ENCODE measurements at regions of chr5 and their contacts with region 1.

Region 1: DNA sequence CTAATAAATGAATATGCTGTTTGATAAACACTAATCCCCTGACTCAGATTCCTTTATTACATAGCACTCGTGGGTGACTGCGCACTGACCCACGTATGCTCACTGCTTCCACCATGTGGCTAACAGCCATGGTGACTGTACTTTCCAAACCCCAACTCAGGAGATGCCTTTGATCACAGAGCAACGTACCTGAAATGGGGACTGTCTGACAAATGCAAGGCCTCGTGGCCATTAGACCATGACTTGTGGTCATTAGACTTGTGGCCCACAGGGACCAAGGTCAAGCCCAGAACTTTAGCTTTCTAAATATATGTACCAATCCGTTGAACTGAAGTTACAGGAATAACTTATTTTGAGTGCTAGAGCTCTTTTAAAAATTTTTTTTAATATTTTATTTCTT is 46.6 kb downstream of the CYFIP2 start:
- DNase-seq: peak; percentile 56
- H3K4me3 Mint-ChIP-seq: no peak overlapping the region
- H3K27ac Mint-ChIP-seq: no peak overlapping the region
- H3K4me1 Mint-ChIP-seq: no peaks in the 10 kb centered on the region
- H3K27me3 Mint-ChIP-seq: no peaks in the 10 kb centered on the region
- CTCF ChIP-seq: peak; percentile 64

Region 2: DNA sequence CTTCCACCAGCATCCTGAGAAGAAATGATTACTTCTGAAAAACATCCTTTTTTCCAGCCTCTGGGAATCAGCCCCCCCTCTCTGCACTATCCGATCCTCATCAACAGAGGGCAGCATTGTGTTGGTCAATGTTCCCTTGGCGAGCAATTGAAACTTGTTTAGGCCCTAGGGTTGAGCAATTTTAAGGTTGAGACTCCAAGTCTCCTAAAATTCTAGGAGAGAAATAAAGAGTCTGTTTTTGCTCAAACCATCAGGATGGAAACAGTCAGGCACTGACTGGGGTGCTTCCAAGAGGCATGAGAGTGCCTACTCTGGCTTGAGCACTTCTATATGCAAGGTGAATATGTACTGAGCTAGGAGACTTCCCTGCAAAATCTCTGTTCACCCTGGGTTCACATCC is 58.9 kb before region 1 on chr5:
- CTCF ChIA-PET with region 1: interaction called, 9 read pairs
- intact Hi-C with region 1: loop called (anchors 1 kb)
- DNase-seq: peak; percentile 72
- H3K4me3 Mint-ChIP-seq: no peak overlapping the region
- H3K27ac Mint-ChIP-seq: no peak overlapping the region
- H3K4me1 Mint-ChIP-seq: no peaks in the 10 kb centered on the region
- H3K27me3 Mint-ChIP-seq: peaks cover 15% of the 10 kb centered on the region
- CTCF ChIP-seq: peak; percentile 95